Activated CD8-positive, alpha-beta T cell treated with anti-CD3 and anti-CD28 coated beads, Interleukin-2, amount 10 ng/mL, durations not matched to agents 7 days and 5 days (primary cell): ENCODE measurements at regions of chr1 and their contacts with region 1.

Region 1: DNA sequence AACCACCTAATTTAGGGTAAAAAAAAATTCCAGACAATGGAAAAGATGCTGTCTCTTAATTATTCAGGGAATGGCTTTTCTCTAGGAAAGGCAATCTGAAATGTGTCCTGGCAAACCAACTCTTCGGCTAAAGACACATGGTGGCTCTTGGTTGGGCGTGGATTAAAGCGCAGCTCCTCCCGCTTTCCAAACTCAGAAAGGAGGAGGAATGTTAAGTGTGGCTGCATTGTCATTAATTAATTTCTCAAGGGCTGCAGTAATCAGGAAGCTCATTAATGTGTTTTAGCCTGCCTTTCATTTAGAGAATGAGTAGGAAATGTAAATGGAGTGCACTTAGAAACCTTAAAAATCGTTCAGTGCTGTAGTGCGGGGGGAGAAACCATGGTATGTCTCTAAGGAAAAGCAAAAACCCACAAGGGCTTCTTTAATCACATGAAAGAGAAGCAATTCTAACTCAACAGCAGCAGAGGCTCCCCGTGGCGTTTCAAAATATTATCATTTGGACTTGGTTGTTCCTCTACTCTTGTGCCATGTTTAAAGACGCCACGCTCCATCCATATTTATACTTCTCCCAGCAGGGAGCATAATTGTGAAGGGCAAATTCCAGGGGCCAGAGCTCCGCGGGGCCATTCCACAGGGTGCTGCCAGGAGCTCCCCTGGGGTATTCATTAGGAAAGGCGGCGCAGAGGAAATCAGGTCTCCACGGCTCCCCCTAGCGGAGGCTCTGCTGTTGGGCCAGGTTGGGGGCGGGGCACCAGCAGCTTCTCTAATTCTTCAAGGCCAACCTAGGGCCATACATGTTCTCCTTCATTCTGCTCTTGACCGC is 91.9 kb upstream of the SSX2IP start:
- DNase-seq: peak; percentile 83
- ATAC-seq: peak; percentile 85
- H3K4me3 Mint-ChIP-seq: peak overlapping the region; percentile 63
- H3K27ac Mint-ChIP-seq: no peak overlapping the region
- H3K4me1 Mint-ChIP-seq: peaks cover 36% of the 10 kb centered on the region
- H3K27me3 Mint-ChIP-seq: peaks cover 4% of the 10 kb centered on the region

Region 2: GRCh38 chr1:84742653-84743052 is 39.5 kb before region 1 on chr1:
- CTCF ChIA-PET with region 1: no interaction called
- POLR2A ChIA-PET with region 1: no interaction called
- DNase-seq: no peak
- ATAC-seq: no peak
- H3K4me3 Mint-ChIP-seq: no peak overlapping the region
- H3K27ac Mint-ChIP-seq: no peak overlapping the region
- H3K4me1 Mint-ChIP-seq: no peaks in the 10 kb centered on the region
- H3K27me3 Mint-ChIP-seq: peaks cover 3% of the 10 kb centered on the region

Region 3: DNA sequence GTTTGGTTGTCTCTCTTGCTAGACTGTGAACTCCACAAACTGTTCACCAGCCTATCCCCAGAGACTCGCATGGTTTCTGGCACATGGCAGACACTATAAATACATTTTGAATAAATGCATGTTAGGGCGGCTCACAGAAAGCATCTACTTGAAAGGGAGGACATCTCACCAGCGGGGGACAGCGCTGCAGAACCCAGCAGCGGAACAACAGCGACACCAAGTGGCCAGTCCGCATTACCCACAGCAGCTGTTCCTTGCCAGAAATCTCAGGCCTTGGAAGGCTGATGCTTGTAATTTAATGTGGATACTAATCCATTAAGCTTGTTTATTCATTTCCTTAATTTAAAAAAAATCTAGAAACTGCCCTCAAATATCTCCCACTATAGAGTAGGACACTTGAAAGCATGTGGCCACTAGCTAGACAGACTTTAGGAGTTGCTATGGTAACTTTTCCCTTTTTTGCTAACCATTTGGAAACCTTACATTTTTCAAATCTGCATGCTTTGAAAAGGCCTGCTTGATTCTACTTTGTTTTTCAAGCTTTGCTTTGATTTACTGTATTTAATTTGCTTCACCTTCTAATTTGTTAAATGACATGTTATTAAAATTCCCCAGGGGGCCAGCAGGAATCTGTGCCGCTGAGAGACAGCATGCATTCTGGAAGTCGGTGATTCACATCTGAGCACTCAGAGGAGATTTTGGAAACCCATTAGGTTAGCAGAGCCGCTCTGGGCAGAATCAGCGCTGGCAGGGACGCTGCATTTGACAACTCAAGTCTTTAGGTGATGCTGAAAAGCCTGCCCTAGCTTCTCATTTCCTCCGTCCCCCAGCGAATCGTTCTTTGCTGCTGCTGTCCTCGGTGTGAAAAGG is 28.4 kb before region 1 on chr1:
- CTCF ChIA-PET with region 1: interaction called, 11 read pairs
- POLR2A ChIA-PET with region 1: no interaction called
- DNase-seq: peak; percentile 80
- ATAC-seq: peak; percentile 92
- H3K4me3 Mint-ChIP-seq: no peak overlapping the region
- H3K27ac Mint-ChIP-seq: no peak overlapping the region
- H3K4me1 Mint-ChIP-seq: peaks cover 5% of the 10 kb centered on the region
- H3K27me3 Mint-ChIP-seq: peaks cover 24% of the 10 kb centered on the region

Region 4: DNA sequence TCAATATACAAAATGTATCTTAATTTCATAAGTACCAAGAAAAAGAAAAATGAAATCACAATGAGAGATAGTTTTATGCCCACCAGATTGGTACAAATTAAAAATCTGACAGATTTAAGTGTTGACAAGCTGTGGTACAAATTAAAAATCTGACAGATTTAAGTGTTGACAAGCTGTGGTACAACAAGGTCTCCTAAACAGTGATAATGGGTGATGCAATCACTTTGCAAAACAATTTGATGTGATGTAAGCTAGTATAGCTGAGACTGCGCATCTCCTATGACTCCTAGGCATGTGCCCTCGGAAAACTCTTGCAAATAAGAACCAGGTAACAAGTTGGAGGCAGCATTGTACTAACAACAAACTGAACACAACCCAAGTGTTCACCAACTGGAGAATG is 10.3 kb after region 1 on chr1:
- CTCF ChIA-PET with region 1: interaction called, 12 read pairs
- POLR2A ChIA-PET with region 1: no interaction called
- DNase-seq: no peak
- ATAC-seq: no peak
- H3K4me3 Mint-ChIP-seq: no peak overlapping the region
- H3K27ac Mint-ChIP-seq: no peak overlapping the region
- H3K4me1 Mint-ChIP-seq: no peaks in the 10 kb centered on the region
- H3K27me3 Mint-ChIP-seq: peaks cover 5% of the 10 kb centered on the region

Region 5: GRCh38 chr1:84800090-84801073 is 18.2 kb after region 1 on chr1:
- CTCF ChIA-PET with region 1: interaction called, 15 read pairs
- POLR2A ChIA-PET with region 1: no interaction called
- DNase-seq: no peak
- ATAC-seq: no peak
- H3K4me3 Mint-ChIP-seq: no peak overlapping the region
- H3K27ac Mint-ChIP-seq: no peak overlapping the region
- H3K4me1 Mint-ChIP-seq: no peaks in the 10 kb centered on the region
- H3K27me3 Mint-ChIP-seq: peaks cover 3% of the 10 kb centered on the region

Region 6: DNA sequence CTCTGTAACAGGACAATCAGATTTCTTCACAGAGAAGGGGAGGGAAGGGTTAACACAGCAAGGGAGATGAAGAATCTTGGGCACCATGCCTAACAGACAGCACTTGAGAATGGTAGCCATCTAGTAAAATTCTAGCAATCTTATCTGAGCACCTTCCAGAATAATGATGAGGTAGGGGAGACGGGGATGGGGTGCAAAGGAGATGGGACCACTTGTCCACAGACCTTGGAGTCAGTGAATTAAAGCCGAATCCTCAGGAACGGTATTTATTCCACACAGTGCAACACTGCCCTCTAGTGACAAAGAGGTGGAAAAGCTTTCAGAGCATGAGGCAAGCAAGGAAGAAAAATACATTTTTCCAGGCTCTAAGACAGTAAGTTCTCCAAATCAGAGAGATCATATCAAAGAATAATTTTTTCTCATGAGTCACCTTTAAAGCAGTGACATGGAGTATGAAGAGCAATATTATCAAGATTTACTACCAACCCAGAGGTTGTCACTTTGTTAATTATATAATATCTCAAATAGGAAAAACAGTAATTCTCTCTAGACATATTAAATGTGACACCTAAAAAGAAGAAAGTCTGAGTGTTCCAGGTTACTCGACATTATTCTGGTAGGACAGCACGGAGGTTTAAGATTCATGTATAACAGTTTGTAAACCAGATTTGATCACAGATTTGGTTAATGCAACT is 154.1 kb after region 1 on chr1:
- CTCF ChIA-PET with region 1: interaction called, 37 read pairs
- POLR2A ChIA-PET with region 1: no interaction called
- DNase-seq: peak; percentile 49
- ATAC-seq: peak; percentile 55
- H3K4me3 Mint-ChIP-seq: no peak overlapping the region
- H3K27ac Mint-ChIP-seq: no peak overlapping the region
- H3K4me1 Mint-ChIP-seq: no peaks in the 10 kb centered on the region
- H3K27me3 Mint-ChIP-seq: no peaks in the 10 kb centered on the region